Activated T-helper 1 cell treated with anti-CD3 and anti-CD28 coated beads, Interleukin-12 subunit alpha, Interleukin-12 subunit beta, Interleukin-2, Interleukin-4 antibody, amounts not matched to agents 30 ng/mL and 10 ng/mL and 1 ng/mL, durations not matched to agents 14 hours and 24 hours and 36 hours (primary cell): ENCODE measurements at regions of chr13 and their contacts with region 1.

Region 1: DNA sequence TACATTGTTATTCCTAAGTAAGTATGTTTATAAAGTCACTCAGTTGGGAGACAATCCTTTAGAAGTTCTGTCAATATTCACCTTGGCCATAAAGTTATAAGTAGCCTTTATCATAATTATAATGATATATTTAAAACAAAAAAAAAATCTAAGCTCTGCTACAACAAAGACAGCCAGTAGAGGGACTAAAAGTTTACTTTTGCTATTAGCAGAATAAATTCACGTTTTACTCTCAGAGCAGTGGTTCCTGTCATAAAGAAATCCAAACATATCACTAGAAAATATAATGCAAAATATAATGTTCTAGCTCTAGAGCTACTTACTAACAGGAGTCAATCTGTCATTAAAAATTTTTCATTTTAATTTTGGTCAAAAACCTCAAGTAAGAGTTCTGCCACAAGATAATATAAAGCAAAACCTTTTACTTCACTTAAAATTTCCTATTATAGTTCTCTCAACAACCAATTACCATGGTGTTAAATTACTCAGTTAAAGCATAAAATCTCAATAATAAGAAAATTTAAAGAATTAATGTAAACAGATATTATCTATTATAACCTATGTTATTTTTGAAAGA is 17.7 kb downstream of the INTS6 start:
- DNase-seq: no peak
- H3K4me3 Mint-ChIP-seq: no peak overlapping the region
- H3K27ac Mint-ChIP-seq: no peak overlapping the region
- H3K4me1 Mint-ChIP-seq: peaks cover 5% of the 10 kb centered on the region
- H3K27me3 Mint-ChIP-seq: no peaks in the 10 kb centered on the region

Region 2: DNA sequence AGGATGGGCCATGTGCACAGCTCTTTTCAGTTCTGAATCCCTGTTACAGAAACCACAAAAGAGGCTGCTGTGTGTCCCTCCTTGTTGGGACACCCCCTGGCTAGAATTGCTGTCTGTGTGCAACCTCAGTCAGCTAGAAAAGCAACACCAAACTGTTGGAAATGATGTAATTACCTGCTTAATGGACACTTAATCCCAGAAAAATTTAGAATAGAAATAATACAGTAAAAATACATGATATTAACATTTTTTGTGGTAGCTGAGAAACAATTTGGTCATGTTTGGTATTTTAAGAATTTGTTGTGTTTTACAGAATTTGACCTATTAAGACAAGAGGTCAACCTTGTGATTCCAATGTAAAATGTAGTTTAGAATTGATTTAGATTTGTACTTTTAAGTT is 166.1 kb before region 1 on chr13:
- intact Hi-C with region 1: no loop called
- DNase-seq: no peak
- H3K4me3 Mint-ChIP-seq: no peak overlapping the region
- H3K27ac Mint-ChIP-seq: no peak overlapping the region
- H3K4me1 Mint-ChIP-seq: no peaks in the 10 kb centered on the region
- H3K27me3 Mint-ChIP-seq: peaks cover 2% of the 10 kb centered on the region

Region 3: GRCh38 chr13:51832471-51833152 is 397.5 kb after region 1 on chr13:
- intact Hi-C with region 1: loop called (anchors 1 kb)
- DNase-seq: no peak
- H3K4me3 Mint-ChIP-seq: no peak overlapping the region
- H3K27ac Mint-ChIP-seq: no peak overlapping the region
- H3K4me1 Mint-ChIP-seq: peaks cover 38% of the 10 kb centered on the region
- H3K27me3 Mint-ChIP-seq: peaks cover 8% of the 10 kb centered on the region

Region 4: GRCh38 chr13:51874651-51875050 is 439.6 kb after region 1 on chr13:
- intact Hi-C with region 1: no loop called
- DNase-seq: no peak
- H3K4me3 Mint-ChIP-seq: no peak overlapping the region
- H3K27ac Mint-ChIP-seq: no peak overlapping the region
- H3K4me1 Mint-ChIP-seq: peaks cover 5% of the 10 kb centered on the region
- H3K27me3 Mint-ChIP-seq: peaks cover 16% of the 10 kb centered on the region